AG04450 (cell line): ENCODE measurements at regions of chr10 and their contacts with region 1.

Region 1: GRCh38 chr10:131885391-131886161 is 15.2 kb upstream of the PPP2R2D start:
- DNase-seq: peak; percentile 13
- H3K4me3 ChIP-seq: no peak overlapping the region
- H3K27ac ChIP-seq: no peak overlapping the region
- H3K27me3 ChIP-seq: no peaks in the 10 kb centered on the region
- CTCF ChIP-seq: peak; percentile 93

Region 2: GRCh38 chr10:131900350-131901146 is 15.0 kb after region 1 on chr10 and contains the start of gene PPP2R2D:
- CTCF ChIA-PET with region 1: interaction called, 13 read pairs
- POLR2A ChIA-PET with region 1: no interaction called
- DNase-seq: peak; percentile 57
- H3K4me3 ChIP-seq: peak within 1 kb of the TSS; percentile 79
- H3K27ac ChIP-seq: peak within 1 kb of the TSS; percentile 47
- H3K27me3 ChIP-seq: peaks cover 30% of the 10 kb centered on the region
- CTCF ChIP-seq: no peak
- polyA plus RNA-seq, gene PPP2R2D: 27.2 and 27.9 TPM in 2 replicates

Region 3: DNA sequence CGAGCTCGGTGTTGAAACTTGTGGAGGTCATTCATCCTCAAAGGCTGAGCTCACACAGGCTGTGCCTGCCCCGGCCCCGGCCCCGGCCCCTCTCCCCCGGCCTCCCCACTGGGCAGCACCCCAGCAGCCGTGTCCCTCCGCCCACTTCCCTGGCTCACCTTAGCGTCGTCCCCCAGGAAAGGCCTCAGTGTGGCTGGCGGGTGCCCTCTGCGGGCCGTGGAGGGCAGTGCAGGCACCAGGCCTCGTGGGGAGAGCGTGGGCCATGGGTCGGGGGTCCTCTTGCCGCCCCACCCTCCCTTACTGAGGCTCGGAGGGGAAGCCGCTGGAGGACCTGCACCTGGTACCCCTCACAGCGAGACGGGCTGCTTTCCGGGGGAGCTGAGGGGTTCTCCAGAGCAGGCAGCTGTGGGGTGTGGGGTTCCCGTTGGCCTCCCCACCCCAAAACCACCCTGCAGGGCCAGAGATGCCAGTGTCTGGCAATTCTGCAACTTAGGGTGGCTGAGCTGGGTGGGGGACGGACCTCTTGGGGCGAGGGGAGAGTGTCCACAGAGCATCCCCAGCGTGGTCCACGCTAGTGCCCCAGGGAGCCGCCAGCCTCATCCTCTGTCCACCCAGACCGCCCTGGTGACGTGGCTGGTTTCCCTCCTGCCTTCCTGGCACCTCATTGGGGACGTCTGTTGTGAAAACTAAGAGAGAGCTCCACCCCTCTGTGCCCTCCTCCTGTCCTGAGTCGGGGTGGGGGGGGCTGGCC is 257.0 kb after region 1 on chr10:
- CTCF ChIA-PET with region 1: interaction called, 16 read pairs
- POLR2A ChIA-PET with region 1: no interaction called
- DNase-seq: no peak
- H3K4me3 ChIP-seq: no peak overlapping the region
- H3K27ac ChIP-seq: no peak overlapping the region
- H3K27me3 ChIP-seq: peaks cover 4% of the 10 kb centered on the region
- CTCF ChIP-seq: peak; percentile 66